ENCODE measurements at regions of chr12 and their contacts with region 1.

Region 1: DNA sequence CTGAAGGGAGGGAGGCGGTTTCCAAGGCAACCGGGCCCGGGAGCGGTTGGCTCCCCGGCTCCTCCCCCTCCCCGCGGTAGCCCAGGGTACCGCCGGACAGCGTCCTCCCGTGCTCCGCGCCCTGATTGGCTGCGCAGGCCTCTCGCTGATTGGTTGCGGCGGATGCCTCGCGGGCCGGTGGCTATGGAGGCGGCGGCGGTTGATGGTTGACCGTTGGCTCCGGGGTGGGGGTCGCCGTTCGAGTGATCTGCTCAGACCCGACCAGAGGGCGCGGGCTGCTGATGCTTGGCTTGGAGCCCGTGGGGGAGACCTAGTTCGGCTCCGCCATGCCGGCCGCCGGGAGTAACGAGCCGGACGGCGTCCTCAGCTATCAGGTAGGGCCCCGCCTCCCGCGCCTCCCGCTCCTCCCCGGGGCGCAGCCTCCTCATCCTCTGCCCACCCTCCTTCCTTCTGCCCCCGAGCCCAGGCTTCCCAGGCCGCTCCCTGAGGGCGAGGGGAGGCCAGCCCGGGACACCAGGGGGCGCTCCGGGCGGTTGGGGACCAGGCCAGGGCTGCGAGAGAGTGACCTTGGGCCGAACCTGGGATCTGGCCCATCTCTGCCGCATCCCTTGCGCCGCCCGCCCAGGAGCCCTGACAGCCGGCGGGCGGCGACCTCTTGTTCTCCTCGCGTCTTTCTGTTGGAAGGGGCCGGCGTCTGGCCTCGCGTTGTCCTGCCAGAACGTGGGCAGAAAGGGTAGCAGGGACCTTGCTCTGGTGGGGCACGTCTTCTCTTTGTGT is at the start of gene SLC4A8:
- DNase-seq: peak; percentile 81
- H3K4me3 ChIP-seq: peak within 1 kb of the TSS; percentile 63
- H3K27ac ChIP-seq: no peak within 1 kb of the TSS
- H3K4me1 ChIP-seq: peaks cover 9% of the 10 kb centered on the region
- H3K27me3 ChIP-seq: no peaks in the 10 kb centered on the region
- CTCF ChIP-seq: peak; percentile 69
- total RNA-seq, gene SLC4A8: 0.59 to 1.1 TPM

Region 2: GRCh38 chr12:51009056-51009440 is 415.8 kb before region 1 on chr12:
- intact Hi-C with region 1: no loop called
- DNase-seq: peak; percentile 44
- H3K4me3 ChIP-seq: no peak overlapping the region
- H3K27ac ChIP-seq: peak overlapping the region; percentile 36
- H3K4me1 ChIP-seq: peaks cover 5% of the 10 kb centered on the region
- H3K27me3 ChIP-seq: no peaks in the 10 kb centered on the region
- CTCF ChIP-seq: no peak

Region 3: DNA sequence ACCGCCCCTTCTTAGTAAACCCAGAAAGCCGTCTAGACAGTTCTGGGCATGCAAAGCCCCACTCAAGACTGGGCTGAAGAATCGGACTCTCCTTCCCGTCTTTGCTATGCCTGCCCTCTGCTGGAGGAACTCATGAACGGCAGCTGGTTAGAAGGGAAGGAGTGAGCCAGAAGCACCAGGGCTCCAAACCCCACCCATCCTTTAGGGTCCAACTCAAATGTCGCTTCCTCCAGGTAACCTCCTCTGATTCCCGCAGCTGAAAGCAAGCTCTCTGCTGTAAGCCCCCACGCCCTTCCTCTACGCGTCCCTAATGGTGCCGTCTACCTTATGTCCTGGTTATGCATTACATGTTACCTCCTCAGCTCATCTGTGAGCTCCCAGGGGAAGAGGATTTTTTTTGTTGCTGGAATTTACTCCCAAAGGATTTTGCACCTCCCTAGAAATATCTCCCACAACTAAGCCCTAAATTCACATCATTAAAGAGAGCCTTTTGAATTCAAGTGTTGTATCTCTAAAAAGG is 107.2 kb after region 1 on chr12:
- intact Hi-C with region 1: loop called (anchors 2 kb)
- DNase-seq: peak; percentile 84
- H3K4me3 ChIP-seq: no peak overlapping the region
- H3K27ac ChIP-seq: no peak overlapping the region
- H3K4me1 ChIP-seq: no peaks in the 10 kb centered on the region
- H3K27me3 ChIP-seq: no peaks in the 10 kb centered on the region
- CTCF ChIP-seq: peak; percentile 87

Region 4: DNA sequence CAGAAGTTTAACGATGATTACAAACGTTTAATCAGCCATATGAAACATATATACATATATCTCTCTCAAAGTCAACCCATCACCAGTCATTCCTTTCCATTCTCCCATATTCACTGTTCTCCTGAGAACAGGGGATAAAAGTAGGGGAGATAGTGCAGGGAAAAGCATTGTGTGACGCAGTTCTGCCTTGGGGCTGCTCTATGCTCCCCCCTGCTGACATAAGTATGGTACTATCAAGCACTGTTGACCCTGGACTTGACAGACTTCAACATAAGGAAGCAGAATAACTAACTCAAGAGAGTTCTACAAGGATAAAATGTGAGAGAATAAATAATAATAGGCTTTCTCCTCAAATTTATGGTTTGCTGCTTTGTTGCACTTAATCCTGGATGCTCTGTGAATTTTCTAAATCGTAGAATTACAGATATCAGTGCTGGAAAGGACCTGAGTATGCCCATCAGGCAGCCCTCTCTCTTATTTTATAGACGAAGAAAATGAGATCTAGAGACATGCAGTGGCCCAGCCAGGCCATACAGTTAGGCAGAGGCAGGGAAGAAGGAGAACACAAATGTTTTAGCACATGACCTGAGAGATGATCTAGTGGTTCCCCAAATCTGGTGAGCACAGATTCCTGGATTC is 253.4 kb after region 1 on chr12:
- intact Hi-C with region 1: loop called (anchors 10 kb)
- DNase-seq: peak; percentile 61
- H3K4me3 ChIP-seq: no peak overlapping the region
- H3K27ac ChIP-seq: no peak overlapping the region
- H3K4me1 ChIP-seq: no peaks in the 10 kb centered on the region
- H3K27me3 ChIP-seq: no peaks in the 10 kb centered on the region
- CTCF ChIP-seq: peak; percentile 71

Region 5: DNA sequence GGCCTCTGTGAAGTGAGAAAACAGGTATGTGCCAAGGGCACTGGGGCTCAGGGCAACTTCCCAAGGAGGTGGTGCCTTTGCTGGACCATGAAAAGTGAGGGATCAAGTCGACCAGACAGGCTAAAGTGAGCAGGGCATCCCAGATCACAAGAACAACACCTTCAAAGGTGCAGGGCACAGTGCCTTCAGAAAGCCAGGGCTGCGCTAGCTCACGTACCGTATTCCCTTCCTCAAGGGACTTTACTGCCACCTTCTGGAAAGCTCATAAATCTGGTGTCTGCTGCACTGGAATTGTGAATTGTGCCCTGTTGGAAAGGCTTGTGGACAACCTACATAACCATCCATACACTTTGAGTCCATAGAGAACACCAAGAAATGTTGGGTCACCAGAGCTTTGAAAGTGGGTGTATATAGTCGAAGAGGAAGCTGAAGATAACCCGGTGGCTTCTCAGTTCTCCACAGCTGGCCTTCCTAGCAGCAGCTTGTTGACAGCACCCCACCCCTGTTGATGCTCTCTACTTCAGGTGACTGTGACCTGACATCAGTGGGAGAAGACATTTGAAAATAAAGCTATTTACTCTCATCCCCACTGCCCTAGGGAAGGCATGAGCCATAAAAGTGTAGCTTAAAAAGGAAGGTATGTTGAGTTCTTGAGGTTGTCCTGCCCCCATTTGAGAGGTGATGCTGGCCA is 399.2 kb after region 1 on chr12:
- intact Hi-C with region 1: loop called (anchors 5 kb)
- DNase-seq: peak; percentile 57
- H3K4me3 ChIP-seq: no peak overlapping the region
- H3K27ac ChIP-seq: no peak overlapping the region
- H3K4me1 ChIP-seq: peaks cover 8% of the 10 kb centered on the region
- H3K27me3 ChIP-seq: no peaks in the 10 kb centered on the region
- CTCF ChIP-seq: peak; percentile 41

Region 6: DNA sequence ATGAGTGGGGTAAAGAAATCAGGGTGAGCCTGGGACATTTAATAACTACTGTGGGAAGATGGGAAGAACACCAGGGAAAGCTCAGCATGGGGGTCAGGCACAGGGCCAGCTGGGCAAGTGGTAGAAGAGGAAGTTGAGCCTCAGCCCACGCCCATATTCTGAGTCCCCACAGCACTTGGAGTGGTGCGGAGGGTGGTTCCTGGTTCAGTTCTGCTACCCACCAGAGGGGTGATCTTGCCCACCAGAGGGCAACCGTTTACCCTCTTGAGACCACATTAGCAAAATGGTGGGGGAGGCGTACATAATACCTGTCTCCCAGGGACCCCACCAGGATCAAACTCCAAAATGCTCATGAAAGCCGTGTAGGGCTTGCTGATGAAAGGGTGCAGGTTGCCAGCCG is 446.3 kb after region 1 on chr12:
- intact Hi-C with region 1: loop called (anchors 5 kb)
- DNase-seq: no peak
- H3K4me3 ChIP-seq: no peak overlapping the region
- H3K27ac ChIP-seq: no peak overlapping the region
- H3K4me1 ChIP-seq: no peaks in the 10 kb centered on the region
- H3K27me3 ChIP-seq: peaks cover 12% of the 10 kb centered on the region
- CTCF ChIP-seq: no peak